Pancreas (tissue), 10 donors: ENCODE measurements at regions of chr2 and their contacts with region 1.

Region 1: DNA sequence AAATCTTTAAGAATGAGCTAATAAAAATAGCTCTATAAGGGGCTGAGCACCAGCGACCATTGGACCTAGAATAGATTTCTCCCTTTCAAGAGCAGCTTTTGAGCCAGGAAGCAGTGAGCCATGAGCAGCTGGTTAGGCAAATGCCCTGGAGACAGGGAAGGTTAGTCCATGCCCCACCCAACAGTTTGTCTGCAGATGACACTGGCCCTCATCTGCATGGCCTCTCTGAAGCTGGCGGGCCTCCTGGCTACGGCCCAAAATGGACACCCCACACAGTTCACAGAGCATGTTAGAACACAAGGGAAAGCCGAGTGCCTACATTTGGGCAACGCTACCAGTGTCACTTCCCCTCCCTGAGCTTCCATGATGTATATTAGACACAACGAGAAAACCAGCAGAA is 201.1 kb downstream of the MGAT5 start:
- DNase-seq: peak in 1 of 6 donors; percentile 26
- ATAC-seq: peak in 1 of 4 donors; percentile 3
- H3K4me3 ChIP-seq: no peak overlapping the region
- H3K27ac ChIP-seq: no peak overlapping the region
- H3K4me1 ChIP-seq: peaks cover 0 to 12% (median 8%) of the 10 kb centered on the region in 3 donors
- H3K27me3 ChIP-seq: no peaks in the 10 kb centered on the region
- CTCF ChIP-seq: no peak

Region 2: DNA sequence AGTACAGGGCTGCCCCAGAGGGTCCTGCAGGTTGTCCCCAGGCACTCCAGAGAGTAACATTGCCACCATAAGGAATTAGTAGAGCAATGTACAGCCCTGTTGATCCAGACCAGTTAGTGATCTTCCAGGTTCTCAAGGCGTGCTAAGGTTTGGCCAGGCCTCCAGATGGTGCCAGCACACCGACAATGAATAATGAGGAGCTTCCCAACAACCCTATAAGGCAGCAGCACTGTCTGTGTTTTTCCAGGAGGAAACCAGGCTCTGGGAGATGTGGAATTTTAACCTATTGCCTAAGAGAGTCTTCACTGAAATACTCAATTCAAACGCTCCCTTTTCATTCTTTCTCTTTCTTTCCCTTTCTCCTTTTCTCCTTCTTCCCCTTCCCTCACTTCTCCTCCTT is 79.0 kb before region 1 on chr2:
- intact Hi-C with region 1: loop called in 2 of 3 experiments (anchors 5 to 10 kb)
- DNase-seq: peak in 4 of 6 donors; percentile 29 to 68 (median 39)
- ATAC-seq: peak; percentile 85 to 94 (median 89)
- H3K4me3 ChIP-seq: no peak overlapping the region
- H3K27ac ChIP-seq: no peak overlapping the region
- H3K4me1 ChIP-seq: no peaks in the 10 kb centered on the region
- H3K27me3 ChIP-seq: no peaks in the 10 kb centered on the region
- CTCF ChIP-seq: no peak